ENCODE measurements at regions of chr1 and their contacts with region 1.

Region 1: GRCh38 chr1:223845810-223846682 is at the start of gene TP53BP2:
- DNase-seq: peak; percentile 81
- H3K4me3 Mint-ChIP-seq: peak within 1 kb of the TSS; percentile 94
- H3K27ac Mint-ChIP-seq: peak within 1 kb of the TSS; percentile 95
- H3K4me1 Mint-ChIP-seq: peaks cover 31% of the 10 kb centered on the region
- H3K27me3 Mint-ChIP-seq: peaks cover 5% of the 10 kb centered on the region
- total RNA-seq, gene TP53BP2: 37.5 and 40.9 TPM in 2 replicates

Region 2: GRCh38 chr1:223726380-223727001 is 119.6 kb before region 1 on chr1:
- intact Hi-C with region 1: loop called (anchors 1 kb)
- DNase-seq: peak; percentile 79
- H3K4me3 Mint-ChIP-seq: peak overlapping the region; percentile 72
- H3K27ac Mint-ChIP-seq: peak overlapping the region; percentile 97
- H3K4me1 Mint-ChIP-seq: peaks cover 64% of the 10 kb centered on the region
- H3K27me3 Mint-ChIP-seq: no peaks in the 10 kb centered on the region

Region 3: GRCh38 chr1:223771814-223772770 is 74.0 kb before region 1 on chr1:
- intact Hi-C with region 1: loop called (anchors 10 kb)
- DNase-seq: no peak
- H3K4me3 Mint-ChIP-seq: no peak overlapping the region
- H3K27ac Mint-ChIP-seq: peak overlapping the region; percentile 30
- H3K4me1 Mint-ChIP-seq: peaks cover 26% of the 10 kb centered on the region
- H3K27me3 Mint-ChIP-seq: no peaks in the 10 kb centered on the region

Region 4: DNA sequence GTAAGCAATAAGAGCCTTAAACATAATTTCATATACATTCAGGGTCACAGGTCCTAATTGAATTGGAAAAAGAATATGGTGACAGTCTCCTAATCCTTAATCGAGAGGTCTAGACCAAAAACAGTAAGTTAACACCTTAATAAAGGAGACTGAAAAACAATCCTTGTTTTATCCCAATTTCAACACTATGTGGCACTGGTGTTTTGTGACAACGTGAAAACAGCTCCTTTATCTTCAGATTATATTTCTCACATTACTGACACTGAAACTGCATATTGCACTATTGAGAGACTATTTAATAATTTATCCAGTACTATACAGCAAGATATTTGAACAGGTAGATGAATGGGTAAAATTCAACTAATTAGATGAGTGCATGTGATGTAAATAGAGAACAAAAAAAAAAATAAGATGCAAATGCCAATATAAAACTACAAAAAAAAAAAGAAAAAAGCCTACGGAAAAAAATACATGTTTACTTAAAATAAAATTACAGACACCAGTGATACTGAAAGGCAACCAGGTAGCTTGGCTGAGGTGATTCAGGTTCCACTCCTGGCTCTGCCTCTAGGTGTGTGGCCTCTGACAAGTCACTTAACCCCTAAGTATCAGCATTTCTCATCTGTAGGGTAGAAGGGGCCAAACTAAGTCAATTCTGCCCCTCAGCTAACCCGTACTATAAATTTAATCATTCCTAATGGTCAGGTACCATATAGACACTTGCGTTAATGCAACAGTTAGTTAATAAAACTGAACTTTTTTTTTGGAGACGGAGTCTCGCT is 34.2 kb before region 1 on chr1:
- intact Hi-C with region 1: loop called (anchors 2 kb)
- DNase-seq: no peak
- H3K4me3 Mint-ChIP-seq: no peak overlapping the region
- H3K27ac Mint-ChIP-seq: no peak overlapping the region
- H3K4me1 Mint-ChIP-seq: peaks cover 18% of the 10 kb centered on the region
- H3K27me3 Mint-ChIP-seq: no peaks in the 10 kb centered on the region

Region 5: DNA sequence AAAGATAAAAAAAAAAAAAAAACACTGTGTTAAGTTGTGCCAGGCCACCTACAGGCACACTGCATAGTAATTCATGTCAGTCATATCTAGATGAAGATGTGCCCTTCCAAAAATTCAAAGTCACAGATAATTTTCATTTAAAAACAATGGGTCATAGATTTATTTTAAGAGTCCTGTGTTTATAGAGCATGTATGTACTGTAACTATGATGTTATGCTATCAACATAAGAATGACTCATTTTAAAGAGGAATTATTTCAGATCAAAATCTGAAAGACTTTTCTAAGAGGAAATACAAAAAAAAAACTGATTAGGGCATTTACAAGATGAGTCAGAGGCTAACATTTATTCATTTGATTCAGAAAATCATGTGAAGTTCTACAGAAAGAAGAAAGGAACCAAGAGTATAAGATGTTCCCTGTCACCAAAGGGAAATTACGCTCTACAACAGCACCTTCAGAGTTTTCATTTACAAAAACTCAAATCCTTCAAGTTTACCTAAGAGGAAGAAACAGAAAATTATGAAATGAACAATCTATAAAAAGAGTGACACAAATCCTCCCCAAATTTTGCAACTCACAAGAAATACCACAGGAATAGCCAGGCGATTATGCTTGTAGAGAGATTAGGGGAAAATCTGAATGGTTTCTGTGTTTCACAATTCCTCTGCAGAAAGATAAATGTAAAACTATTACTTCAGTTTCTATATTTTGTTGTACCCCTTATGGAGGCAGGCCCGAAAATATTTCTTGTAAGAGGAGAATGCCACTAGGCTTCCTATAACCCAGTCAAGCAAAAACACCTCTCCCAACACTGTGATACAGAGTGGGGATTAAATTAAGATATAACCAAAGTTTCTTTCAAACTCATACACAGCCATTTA is 14.1 kb before region 1 on chr1:
- intact Hi-C with region 1: loop called (anchors 1 kb)
- DNase-seq: no peak
- H3K4me3 Mint-ChIP-seq: peak overlapping the region; percentile 54
- H3K27ac Mint-ChIP-seq: peak overlapping the region; percentile 92
- H3K4me1 Mint-ChIP-seq: peaks cover 24% of the 10 kb centered on the region
- H3K27me3 Mint-ChIP-seq: no peaks in the 10 kb centered on the region

Region 6: GRCh38 chr1:224113918-224114786 is 268.1 kb after region 1 on chr1 and contains the start of gene FBXO28:
- intact Hi-C with region 1: loop called (anchors 5 kb)
- DNase-seq: peak; percentile 90
- H3K4me3 Mint-ChIP-seq: peak within 1 kb of the TSS; percentile 80
- H3K27ac Mint-ChIP-seq: peak within 1 kb of the TSS; percentile 79
- H3K4me1 Mint-ChIP-seq: peaks cover 25% of the 10 kb centered on the region
- H3K27me3 Mint-ChIP-seq: peaks cover 17% of the 10 kb centered on the region
- total RNA-seq, gene FBXO28: 22.9 and 24.3 TPM in 2 replicates